ENCODE measurements at regions of chr12 and their contacts with region 1.

Region 1: GRCh38 chr12:124518051-124518932 is 49.1 kb downstream of the NCOR2 start:
- DNase-seq: peak; percentile 99 to 100
- H3K4me3 ChIP-seq: peak overlapping the region; percentile 28
- CTCF ChIP-seq: no peak
- POLR2A ChIP-seq: no peak

Region 2: DNA sequence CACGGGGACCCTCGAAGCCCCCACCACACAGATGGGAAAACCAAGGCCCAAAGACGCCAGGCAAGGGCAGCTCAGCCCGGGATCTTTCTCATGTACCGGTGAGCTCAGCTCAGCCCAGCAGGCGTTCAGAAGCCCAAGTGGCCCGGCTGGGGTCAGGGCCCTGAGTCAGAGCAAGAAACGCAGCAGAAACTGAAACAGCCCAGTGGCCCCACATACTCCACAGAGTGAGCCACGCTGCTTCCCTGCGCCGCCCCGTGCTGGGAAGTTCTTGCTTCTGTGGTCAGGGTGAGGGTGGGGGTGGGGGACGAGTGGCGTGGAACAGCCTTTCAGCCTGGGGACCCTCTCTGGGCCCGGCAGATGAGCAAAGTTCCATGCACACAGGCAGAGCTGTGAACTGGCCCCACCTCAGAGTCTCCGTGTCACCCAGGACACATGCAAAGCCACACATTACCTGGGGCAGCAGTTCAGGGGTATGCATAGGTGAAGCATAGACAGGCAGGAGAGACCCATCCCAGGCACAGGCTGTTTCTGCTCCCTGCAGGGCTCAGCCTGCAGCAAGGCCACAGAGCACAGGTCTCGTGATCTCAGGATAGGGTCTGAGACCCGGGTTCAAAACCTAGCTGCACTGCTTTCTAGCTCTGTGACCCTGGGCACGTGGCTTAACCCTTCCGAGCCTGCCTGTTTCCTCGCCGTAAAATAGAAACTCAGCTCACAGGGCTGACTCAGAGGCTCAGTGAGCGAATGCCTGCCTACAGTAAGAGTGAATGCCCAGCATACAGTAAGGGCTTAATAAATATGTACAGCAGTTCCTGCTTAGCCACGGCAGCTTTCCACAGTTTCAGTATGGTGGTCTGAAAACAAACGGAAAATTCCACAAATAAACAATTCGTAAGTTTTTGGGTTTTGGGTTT is 27.5 kb after region 1 on chr12:
- intact Hi-C with region 1: no loop called
- DNase-seq: no peak
- H3K4me3 ChIP-seq: no peak overlapping the region
- CTCF ChIP-seq: no peak
- POLR2A ChIP-seq: no peak

Region 3: GRCh38 chr12:124567661-124568373 is 49.5 kb after region 1 on chr12:
- intact Hi-C with region 1: loop called (anchors 10 kb)
- DNase-seq: peak; percentile 90 to 98
- H3K4me3 ChIP-seq: no peak overlapping the region
- CTCF ChIP-seq: no peak
- POLR2A ChIP-seq: no peak